Heart left ventricle (tissue), 16 donors: ENCODE measurements at regions of chr9 and their contacts with region 1.

Region 1: DNA sequence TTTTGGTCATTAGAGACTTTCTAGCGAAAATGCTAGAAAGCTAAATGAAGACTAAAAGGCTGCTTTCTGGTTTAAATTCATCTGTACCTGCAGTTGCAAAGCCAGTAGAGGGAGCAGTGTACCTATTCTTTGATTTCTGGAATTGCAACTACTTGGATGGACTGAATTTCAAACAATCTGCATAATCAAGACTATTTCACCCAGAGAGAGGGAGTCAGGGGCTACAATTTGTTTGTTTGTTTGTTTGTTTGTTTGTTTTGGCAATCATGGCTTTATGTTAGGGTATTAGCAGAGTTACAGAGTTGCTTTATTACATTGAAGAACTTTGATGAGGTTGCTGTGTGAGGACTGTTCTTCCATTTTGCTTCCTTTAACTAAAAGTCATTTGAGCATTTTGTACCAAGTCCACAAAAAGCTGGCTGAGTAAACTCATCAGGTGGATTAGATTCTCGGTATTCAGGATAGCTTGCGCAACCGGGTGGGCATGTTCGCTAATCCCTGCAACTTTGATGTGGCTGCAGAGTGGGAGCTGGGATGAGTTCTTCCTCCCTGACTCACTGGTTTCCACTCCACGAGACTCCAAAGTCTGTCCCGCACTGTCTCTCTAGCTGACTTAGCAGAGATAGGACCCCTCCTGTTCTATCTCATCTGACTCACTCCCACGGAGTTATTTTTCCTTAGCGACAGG is 80.0 kb upstream of the TUT7 start:
- DNase-seq: peak in 3 of 5 donors; percentile 9 to 25 (median 25)
- ATAC-seq: peak; percentile 51 to 75 (median 58)
- H3K4me3 ChIP-seq: peak overlapping the region in 2 of 12 donors; percentile 14 to 26
- H3K27ac ChIP-seq: peak overlapping the region in 4 of 12 donors; percentile 13 to 37 (median 28)
- H3K4me1 ChIP-seq: no peaks in the 10 kb centered on the region
- H3K27me3 ChIP-seq: no peaks in the 10 kb centered on the region
- CTCF ChIP-seq: peak; percentile 48 to 80 (median 68)
- POLR2A ChIP-seq: no peak

Region 2: DNA sequence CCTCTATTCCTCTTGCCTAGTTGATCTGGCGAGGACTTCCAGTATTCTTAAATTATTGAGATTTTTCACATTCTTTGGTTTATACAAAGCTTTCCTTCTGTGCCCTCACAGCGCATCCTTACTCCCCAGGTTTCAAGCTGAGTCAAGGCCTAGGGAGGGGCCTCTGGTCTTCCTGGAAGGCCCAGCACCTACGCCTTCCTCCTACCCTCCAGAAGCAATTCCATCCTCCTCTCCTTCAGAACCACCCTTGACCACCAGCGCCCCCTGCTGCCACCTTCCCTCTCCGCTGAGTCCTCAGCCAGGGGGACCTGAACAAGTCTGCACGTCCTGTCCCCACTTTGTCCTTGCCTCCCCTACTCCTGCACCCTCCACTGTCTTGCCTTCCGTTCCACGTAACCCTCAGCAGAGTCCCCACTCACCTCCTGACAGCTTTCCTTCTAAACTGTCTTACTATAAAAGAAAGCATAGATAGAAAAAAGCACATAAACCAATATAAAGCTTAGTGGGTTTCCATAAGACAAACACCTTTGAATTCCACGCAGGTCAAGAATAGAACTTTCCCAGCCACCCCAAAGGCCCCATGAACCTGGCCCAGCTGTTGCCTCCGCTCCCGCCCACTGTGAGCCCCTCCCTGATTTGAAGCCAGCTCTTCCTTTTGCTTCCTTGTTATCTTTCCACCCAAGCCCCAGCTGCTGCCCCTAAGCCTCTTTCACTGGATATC is 1228.8 kb after region 1 on chr9:
- intact Hi-C with region 1: loop called in 4 of 10 experiments (anchors 5 to 10 kb)
- DNase-seq: peak; percentile 59 to 86 (median 67)
- ATAC-seq: peak; percentile 58 to 89 (median 72)
- H3K4me3 ChIP-seq: no peak overlapping the region
- H3K27ac ChIP-seq: no peak overlapping the region
- H3K4me1 ChIP-seq: no peaks in the 10 kb centered on the region
- H3K27me3 ChIP-seq: peaks cover 0 to 5% (median 0%) of the 10 kb centered on the region in 9 donors
- CTCF ChIP-seq: peak; percentile 65 to 84 (median 74)
- POLR2A ChIP-seq: no peak